Right ventricle myocardium inferior (tissue), 1 donor: ENCODE measurements at regions of chr15 and their contacts with region 1.

Region 1: GRCh38 chr15:48877630-48878595 is at the start of gene EID1:
- DNase-seq: peak; percentile 95
- ATAC-seq: peak; percentile 99
- total RNA-seq, gene EID1: 201 TPM

Region 2: GRCh38 chr15:48963524-48964113 is 85.7 kb after region 1 on chr15 and contains the start of gene SHC4:
- intact Hi-C with region 1: loop called (anchors 2 kb)
- DNase-seq: peak; percentile 77
- ATAC-seq: peak; percentile 77
- total RNA-seq, gene SHC4: 1.5 TPM

Region 3: DNA sequence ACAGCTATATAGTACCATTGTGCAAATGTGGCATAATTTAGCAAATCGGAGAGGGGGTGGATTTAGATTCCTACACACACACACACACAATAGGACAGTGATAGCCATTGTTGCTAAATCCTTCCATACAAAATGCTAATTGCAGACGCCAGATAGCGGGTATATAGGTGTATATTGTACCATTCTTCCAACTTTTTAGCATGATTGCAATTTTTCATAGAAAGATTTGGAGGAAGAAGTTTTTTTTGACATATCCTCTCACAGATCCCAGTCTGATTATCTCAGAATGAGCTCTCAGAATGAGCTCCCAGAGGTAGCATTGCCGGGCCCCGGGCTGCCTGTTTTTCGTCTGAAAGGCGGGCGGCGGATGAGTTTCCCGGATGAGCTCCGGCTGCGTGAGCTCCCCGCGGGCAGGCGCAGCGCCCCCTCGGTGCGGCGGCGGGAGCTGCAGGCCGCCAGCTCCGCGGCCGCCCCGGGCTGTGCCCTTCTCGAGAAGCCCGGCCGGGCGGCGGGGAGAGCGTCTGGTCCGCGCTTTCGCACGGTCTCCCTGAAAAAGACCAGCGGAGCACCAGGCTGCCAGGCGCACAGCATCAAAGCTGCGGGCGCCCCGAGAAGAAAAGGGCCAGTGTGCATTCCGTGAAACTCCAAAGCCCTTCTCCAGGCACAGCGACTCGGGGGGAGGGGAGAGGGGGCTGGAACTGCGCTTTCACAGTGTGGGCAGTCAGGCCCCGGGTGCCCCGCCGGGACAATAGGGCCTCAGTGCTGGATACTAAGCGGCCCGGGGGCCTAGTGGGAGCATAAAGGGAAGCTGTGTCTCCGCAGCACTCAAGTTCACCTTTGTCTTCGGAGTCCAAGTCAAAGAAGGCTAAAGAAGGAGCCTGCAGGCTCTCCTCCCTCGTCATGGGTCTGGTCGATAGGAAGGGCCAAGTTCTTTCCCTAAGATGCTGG is 97.8 kb after region 1 on chr15:
- intact Hi-C with region 1: loop called (anchors 2 kb)
- DNase-seq: peak; percentile 90
- ATAC-seq: peak; percentile 97

Region 4: GRCh38 chr15:49145651-49146609 is 268.0 kb after region 1 on chr15:
- intact Hi-C with region 1: loop called (anchors 5 kb)
- DNase-seq: no peak
- ATAC-seq: no peak